AG04449 (cell line): ENCODE measurements at regions of chr19 and their contacts with region 1.

Region 1: DNA sequence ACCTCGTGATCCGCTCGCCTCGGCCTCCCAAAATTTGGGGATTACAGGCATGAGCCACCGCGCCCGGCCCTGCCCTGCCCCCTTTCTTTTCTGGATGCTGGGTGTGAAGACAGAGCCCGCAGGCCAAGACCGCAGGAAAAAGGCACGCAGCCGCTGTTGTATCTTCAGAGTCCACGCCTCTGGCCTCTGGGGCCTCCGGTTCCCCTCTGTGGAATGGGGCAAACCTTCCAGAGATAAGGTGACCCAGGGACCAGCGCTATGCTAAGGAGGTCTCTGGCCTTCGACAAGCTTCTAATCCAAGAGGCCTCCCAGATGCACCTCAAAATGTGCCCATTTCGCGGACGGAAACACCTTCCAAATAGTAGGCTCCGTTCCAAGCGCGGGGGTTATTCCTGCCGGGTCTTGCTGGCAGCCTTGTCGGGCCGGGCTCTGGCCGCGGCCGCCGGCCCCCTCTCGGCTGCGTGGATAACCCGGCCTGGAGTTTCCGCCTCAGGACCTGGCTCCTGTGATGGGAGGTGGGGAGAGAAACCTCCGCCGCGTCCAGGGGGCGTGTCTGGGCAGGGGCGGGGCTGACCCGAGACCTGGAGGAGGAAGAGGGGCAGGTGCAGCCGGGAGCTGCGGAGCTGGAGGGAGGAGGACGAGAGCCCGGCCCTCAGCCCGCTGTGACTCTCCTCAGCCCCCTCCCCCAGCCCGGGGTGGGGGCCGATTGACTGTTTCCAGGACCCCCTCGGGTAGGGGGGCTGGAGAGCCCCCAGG is 13.1 kb downstream of the TJP3 start:
- DNase-seq: no peak
- H3K4me3 ChIP-seq: peak overlapping the region; percentile 15; the same call in 1 of the 2 replicates
- CTCF ChIP-seq: no peak

Region 2: DNA sequence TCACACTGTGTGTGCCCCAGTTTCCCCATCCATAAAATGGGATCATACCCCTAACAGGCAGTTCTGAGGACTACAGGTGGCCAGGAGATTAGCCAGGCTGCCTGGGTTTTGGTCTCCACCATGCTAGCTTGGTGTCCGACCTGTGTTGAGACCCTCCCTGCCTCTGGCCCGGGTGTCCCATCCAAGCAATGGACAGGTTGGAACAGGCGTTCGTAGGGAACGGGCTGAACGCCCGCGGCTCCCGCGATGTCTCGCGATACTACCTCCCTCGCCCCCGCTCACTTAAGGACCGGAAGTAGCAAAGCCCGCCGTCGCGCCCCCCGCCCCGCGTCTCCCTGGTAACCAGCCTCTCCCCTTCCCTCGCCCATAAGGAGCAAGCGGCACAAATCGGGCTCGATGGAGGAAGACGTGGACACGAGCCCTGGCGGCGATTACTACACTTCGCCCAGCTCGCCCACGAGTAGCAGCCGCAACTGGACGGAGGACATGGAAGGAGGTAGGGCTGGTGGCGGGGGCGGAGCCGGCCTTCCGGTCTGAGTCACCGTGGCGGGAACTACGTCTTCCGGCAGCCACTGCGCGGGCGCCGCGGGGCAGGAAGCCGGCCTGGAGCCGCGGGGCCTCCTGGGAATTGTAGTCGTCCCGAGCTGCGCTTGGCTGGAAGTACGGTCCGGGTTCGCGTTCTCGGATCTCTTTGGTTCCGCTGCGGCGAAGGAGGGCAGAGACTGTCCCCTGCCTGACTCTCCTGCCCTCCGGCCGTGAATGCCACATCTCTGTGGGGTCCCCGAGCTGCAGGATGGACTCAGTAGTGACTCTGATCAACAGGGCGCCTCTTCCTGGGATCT is 286.4 kb before region 1 on chr19:
- CTCF ChIA-PET with region 1: no interaction called
- POLR2A ChIA-PET with region 1: no interaction called
- DNase-seq: peak; percentile 47
- H3K4me3 ChIP-seq: peak overlapping the region; percentile 58
- CTCF ChIP-seq: no peak

Region 3: DNA sequence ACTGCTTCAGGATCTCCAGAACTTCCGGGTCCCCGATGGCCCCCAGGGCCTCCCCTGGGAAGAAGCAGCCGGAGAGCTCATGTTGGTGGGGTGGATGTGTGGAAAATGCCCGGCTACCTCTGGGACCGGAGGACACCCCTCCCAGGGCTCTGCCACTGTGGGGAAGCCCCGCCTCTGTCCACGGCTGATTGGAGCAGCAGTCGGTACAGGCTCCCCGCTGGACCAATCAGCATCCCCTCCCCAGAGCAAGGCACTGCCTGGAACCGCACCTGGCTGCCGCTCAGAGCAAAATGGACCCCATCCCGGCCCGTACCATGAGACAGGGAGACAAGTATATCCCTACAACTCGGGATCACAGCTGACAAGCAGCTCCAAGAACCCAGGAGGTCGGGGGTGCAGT is 227.3 kb before region 1 on chr19:
- CTCF ChIA-PET with region 1: no interaction called
- POLR2A ChIA-PET with region 1: no interaction called
- DNase-seq: no peak
- H3K4me3 ChIP-seq: no peak overlapping the region
- CTCF ChIP-seq: no peak

Region 4: GRCh38 chr19:3700221-3701032 is 20.9 kb before region 1 on chr19 and contains the start of gene PIP5K1C:
- CTCF ChIA-PET with region 1: interaction called, 63 read pairs
- POLR2A ChIA-PET with region 1: no interaction called
- DNase-seq: no peak
- H3K4me3 ChIP-seq: peak within 1 kb of the TSS; percentile 74
- CTCF ChIP-seq: peak; percentile 86

Region 5: DNA sequence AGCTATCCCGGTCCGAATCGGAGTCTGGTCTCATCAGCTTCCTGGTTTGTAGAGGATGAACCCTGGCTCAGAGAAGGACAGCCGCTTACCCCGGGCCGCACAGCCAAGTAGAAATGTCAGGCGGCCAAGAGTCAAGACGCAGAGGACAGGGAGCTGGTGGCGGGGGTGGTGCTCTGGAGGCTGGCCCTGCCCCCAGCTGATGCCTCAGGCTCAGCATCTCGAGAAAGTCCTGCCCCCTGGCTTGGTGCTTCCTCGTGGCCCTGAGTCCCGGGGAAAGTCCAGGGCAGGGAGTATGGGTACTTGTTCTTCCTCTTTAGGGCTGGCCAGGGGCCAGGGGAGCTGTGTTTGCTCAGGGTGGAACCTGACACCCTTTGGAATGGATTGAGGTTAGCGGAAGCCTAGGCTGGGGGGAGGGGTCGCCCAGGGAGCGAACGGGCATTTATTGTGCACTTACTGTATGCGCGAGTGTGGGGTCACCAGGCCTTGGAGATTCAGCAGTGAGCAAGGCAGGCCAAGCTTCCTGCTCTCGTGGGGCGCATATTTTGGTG is 11.0 kb before region 1 on chr19:
- CTCF ChIA-PET with region 1: interaction called, 63 read pairs
- POLR2A ChIA-PET with region 1: no interaction called
- DNase-seq: no peak
- H3K4me3 ChIP-seq: no peak overlapping the region
- CTCF ChIP-seq: no peak

Region 6: DNA sequence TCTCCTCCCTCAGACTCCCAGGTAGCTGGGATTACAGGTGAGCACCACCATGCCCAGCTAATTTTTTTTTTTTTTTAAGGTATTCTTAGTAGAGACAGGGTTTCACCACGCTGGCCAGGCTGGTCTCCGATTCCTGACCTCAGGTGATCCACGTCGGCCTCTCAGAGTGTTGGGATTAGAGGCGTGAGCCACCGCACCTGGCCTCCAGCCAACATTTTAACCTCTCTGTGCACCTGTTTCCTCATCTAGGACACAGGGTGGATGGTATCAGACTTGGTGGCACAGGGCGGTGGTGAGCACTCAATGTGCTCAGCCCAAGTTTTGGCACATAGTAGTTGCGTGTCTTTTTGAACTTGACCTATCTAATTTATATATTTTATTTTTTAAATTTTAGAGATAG is 27.7 kb after region 1 on chr19:
- CTCF ChIA-PET with region 1: no interaction called
- POLR2A ChIA-PET with region 1: no interaction called
- DNase-seq: no peak
- H3K4me3 ChIP-seq: no peak overlapping the region
- CTCF ChIP-seq: no peak